Activated CD4-positive, alpha-beta T cell treated with anti-CD3 and anti-CD28 coated beads, Interleukin-2, amount 10 ng/mL, durations not matched to agents 7 days and 5 days (primary cell): ENCODE measurements at regions of chr9 and their contacts with region 1.

Region 1: DNA sequence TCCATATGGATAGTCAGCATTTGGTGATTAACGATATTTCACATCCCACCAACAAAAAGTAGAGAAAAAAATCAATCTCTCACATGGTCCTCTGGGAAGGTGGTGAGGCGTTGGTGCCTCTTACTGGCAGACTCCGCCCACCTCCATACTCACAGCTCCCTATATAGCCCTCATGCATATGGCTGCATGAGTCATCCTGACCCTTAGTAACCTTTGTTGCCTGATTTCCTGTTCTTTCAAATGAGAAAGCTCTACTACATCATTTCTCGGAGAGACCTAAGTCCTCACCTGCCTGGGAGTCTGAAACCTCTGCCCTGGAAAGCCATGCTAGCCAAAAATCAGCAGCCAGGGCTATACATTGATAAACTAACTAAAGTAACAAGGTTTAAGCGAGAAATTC is 33.3 kb upstream of the ABCA1 start:
- DNase-seq: peak; percentile 55
- H3K4me3 Mint-ChIP-seq: no peak overlapping the region
- H3K27ac Mint-ChIP-seq: no peak overlapping the region
- H3K4me1 Mint-ChIP-seq: peaks cover 27% of the 10 kb centered on the region
- H3K27me3 Mint-ChIP-seq: no peaks in the 10 kb centered on the region

Region 2: GRCh38 chr9:104885818-104886709 is 75.2 kb before region 1 on chr9:
- CTCF ChIA-PET with region 1: no interaction called
- POLR2A ChIA-PET with region 1: no interaction called
- DNase-seq: no peak
- H3K4me3 Mint-ChIP-seq: no peak overlapping the region
- H3K27ac Mint-ChIP-seq: no peak overlapping the region
- H3K4me1 Mint-ChIP-seq: no peaks in the 10 kb centered on the region
- H3K27me3 Mint-ChIP-seq: no peaks in the 10 kb centered on the region

Region 3: DNA sequence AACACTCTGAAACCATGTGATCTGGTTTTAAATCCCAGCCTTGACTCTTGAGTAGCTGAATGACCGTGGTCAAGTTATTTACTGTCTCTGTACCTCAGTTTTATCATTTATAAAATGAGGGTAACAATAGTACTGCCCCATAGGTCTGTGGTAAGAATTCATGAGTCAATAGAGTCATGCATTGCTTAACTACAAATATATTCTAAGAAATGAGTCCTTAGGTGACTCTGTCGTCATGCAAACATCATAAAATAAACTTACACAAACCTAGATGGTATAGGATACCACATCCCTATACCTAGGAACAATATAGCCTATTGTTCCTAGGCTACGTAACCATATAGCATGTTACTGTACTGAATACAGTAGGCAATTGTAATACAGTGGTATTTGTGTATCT is 13.0 kb before region 1 on chr9:
- CTCF ChIA-PET with region 1: interaction called, 13 read pairs
- POLR2A ChIA-PET with region 1: no interaction called
- DNase-seq: no peak
- H3K4me3 Mint-ChIP-seq: no peak overlapping the region
- H3K27ac Mint-ChIP-seq: no peak overlapping the region
- H3K4me1 Mint-ChIP-seq: peaks cover 4% of the 10 kb centered on the region
- H3K27me3 Mint-ChIP-seq: no peaks in the 10 kb centered on the region

Region 4: GRCh38 chr9:105103782-105104181 is 142.5 kb after region 1 on chr9:
- CTCF ChIA-PET with region 1: no interaction called
- POLR2A ChIA-PET with region 1: no interaction called
- DNase-seq: no peak
- H3K4me3 Mint-ChIP-seq: no peak overlapping the region
- H3K27ac Mint-ChIP-seq: no peak overlapping the region
- H3K4me1 Mint-ChIP-seq: no peaks in the 10 kb centered on the region
- H3K27me3 Mint-ChIP-seq: no peaks in the 10 kb centered on the region